Naive thymus-derived CD4-positive, alpha-beta T cell (primary cell): ENCODE measurements at regions of chr12 and their contacts with region 1.

Region 1: GRCh38 chr12:80129895-80130530 is 30.7 kb downstream of the OTOGL start:
- DNase-seq: no peak
- ATAC-seq: no peak
- H3K4me3 ChIP-seq: no peak overlapping the region
- H3K4me3 Mint-ChIP-seq: no peak overlapping the region
- H3K27ac ChIP-seq: no peak overlapping the region
- H3K27ac Mint-ChIP-seq: peak overlapping the region in 1 of 9 donors; percentile 21
- H3K4me1 ChIP-seq: no peaks in the 10 kb centered on the region
- H3K4me1 Mint-ChIP-seq: no peaks in the 10 kb centered on the region
- H3K27me3 ChIP-seq: no peaks in the 10 kb centered on the region
- H3K27me3 Mint-ChIP-seq: peaks cover 0 to 9% (median 2%) of the 10 kb centered on the region in 5 donors

Region 2: DNA sequence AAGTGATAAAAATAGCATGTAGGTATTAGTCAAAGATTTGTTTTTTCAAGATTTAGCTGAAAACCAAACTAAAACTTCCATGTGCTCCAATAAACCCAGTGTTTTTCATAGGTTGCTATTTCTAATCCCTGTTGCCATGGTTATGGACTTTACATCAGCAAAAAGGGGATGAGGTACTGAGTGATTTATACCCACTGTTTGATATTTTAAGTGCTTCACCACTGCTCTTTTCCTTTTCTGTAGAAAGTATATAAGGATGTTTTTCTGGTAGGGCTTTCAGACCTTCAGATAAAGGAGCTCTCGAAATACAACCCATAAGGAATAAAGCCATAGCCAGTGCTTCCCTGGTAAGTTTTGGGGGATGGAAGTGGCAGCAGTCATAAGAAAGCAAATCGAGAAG is 30.8 kb before region 1 on chr12 and contains the start of gene OTOGL:
- CTCF ChIA-PET with region 1: no interaction called
- POLR2A ChIA-PET with region 1: no interaction called
- intact Hi-C with region 1: loop called in 1 of 2 experiments (anchors 5 kb)
- DNase-seq: no peak
- ATAC-seq: no peak
- H3K4me3 ChIP-seq: no peak within 1 kb of the TSS
- H3K4me3 Mint-ChIP-seq: no peak within 1 kb of the TSS
- H3K27ac ChIP-seq: no peak within 1 kb of the TSS
- H3K27ac Mint-ChIP-seq: peak within 1 kb of the TSS in 1 of 9 donors; percentile 8
- H3K4me1 ChIP-seq: no peaks in the 10 kb centered on the region
- H3K4me1 Mint-ChIP-seq: peaks cover 0 to 3% (median 0%) of the 10 kb centered on the region in 7 donors
- H3K27me3 ChIP-seq: no peaks in the 10 kb centered on the region
- H3K27me3 Mint-ChIP-seq: peaks cover 0 to 4% (median 0%) of the 10 kb centered on the region in 5 donors
- total RNA-seq, gene OTOGL: not detected

Region 3: DNA sequence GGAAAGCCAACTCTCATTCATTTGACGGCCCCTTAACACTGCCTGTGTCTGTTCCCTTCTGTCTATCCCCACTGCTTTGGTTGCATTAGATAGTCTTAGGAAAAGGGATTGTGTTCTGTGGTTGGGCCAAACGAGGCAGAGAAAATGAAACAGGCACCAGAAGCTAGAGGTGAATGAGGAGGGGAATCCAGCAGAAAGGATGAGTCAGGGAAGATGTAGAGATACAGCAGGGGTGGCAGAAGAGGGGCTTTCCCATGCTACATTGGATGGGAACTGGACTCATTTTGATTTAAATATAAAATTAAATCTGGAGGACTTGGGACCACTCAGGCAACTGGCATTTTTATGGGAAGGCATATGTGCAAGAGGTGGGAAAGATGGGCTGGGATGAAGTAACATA is 12.6 kb after region 1 on chr12:
- CTCF ChIA-PET with region 1: no interaction called
- POLR2A ChIA-PET with region 1: no interaction called
- intact Hi-C with region 1: no loop called
- DNase-seq: no peak
- ATAC-seq: no peak
- H3K4me3 ChIP-seq: no peak overlapping the region
- H3K4me3 Mint-ChIP-seq: no peak overlapping the region
- H3K27ac ChIP-seq: no peak overlapping the region
- H3K27ac Mint-ChIP-seq: no peak overlapping the region
- H3K4me1 ChIP-seq: no peaks in the 10 kb centered on the region
- H3K4me1 Mint-ChIP-seq: no peaks in the 10 kb centered on the region
- H3K27me3 ChIP-seq: no peaks in the 10 kb centered on the region
- H3K27me3 Mint-ChIP-seq: peaks cover 0 to 16% (median 5%) of the 10 kb centered on the region in 5 donors

Region 4: DNA sequence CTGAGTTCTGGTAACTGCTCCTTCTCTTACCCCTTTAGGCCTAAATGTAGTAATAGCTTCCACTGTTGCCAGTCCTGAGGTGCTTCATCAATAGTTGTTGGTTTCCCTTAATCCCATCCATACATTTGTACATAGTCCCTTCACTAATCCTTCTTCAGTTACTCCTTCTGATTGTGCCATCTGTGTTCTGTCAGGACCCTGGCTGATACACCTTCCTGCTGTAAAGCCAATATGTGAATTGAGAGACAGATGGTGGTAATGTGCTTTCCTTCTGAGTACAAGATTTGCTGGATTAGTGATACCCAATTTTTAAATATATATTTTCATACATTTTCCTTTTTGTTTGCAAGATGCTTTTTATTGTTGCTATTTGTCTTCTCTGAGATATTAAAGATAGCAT is 35.7 kb after region 1 on chr12:
- CTCF ChIA-PET with region 1: no interaction called
- POLR2A ChIA-PET with region 1: no interaction called
- intact Hi-C with region 1: no loop called
- DNase-seq: no peak
- ATAC-seq: no peak
- H3K4me3 ChIP-seq: no peak overlapping the region
- H3K4me3 Mint-ChIP-seq: no peak overlapping the region
- H3K27ac ChIP-seq: no peak overlapping the region
- H3K27ac Mint-ChIP-seq: no peak overlapping the region
- H3K4me1 ChIP-seq: no peaks in the 10 kb centered on the region
- H3K4me1 Mint-ChIP-seq: peaks cover 0 to 9% (median 0%) of the 10 kb centered on the region in 7 donors
- H3K27me3 ChIP-seq: no peaks in the 10 kb centered on the region
- H3K27me3 Mint-ChIP-seq: peaks cover 0 to 26% (median 0%) of the 10 kb centered on the region in 5 donors